ENCODE measurements at regions of chr6 and their contacts with region 1.

Region 1: DNA sequence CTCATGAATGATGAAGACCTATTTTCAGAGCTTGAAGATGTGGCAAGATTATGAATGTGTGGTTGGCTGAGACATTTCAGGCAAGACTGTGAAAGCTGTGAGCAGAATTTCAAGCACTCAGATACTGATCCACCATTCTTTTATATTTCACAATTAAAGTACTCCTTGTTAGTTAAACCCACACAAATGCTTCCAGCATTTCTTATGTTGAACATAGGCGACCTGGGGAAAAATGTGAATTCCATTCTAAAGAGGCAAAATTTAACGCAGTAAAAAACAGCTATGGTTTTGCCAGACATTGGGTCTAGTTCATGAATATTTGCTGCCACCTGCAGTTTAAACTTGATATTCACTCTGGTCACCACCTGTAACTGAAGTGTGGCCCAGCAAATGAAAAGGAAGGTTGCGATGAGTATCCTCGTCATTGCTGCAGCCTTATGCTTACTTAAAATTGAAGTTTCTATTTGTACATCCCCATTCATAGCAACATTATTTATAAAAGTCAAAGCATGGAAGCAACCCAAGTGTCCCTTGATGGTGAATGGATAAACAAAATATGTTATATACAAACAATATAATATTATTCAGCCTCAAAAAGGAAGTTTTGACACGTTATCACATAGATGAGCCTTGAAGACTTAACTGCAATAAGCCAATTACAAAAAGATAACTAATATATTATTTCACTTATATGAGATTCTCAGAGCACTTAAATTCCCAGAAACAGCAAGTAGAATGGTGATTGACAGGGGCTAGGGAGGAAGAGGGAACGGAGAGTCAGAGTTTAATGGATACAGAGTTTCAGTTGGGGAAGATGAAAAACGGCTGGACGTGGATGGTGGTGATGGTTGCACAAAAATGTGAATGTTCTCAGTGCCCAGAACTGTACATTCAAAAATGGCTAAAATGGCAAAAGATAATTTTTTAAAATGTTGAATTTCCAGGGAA is 32.4 kb upstream of the FAM184A start:
- DNase-seq: peak; percentile 49
- H3K4me3 ChIP-seq: no peak overlapping the region
- H3K27ac ChIP-seq: no peak overlapping the region
- H3K4me1 ChIP-seq: no peaks in the 10 kb centered on the region
- H3K27me3 ChIP-seq: no peaks in the 10 kb centered on the region
- CTCF ChIP-seq: peak; percentile 67
- EP300 ChIP-seq: no peak
- RAD21 ChIP-seq: peak; percentile 87

Region 2: DNA sequence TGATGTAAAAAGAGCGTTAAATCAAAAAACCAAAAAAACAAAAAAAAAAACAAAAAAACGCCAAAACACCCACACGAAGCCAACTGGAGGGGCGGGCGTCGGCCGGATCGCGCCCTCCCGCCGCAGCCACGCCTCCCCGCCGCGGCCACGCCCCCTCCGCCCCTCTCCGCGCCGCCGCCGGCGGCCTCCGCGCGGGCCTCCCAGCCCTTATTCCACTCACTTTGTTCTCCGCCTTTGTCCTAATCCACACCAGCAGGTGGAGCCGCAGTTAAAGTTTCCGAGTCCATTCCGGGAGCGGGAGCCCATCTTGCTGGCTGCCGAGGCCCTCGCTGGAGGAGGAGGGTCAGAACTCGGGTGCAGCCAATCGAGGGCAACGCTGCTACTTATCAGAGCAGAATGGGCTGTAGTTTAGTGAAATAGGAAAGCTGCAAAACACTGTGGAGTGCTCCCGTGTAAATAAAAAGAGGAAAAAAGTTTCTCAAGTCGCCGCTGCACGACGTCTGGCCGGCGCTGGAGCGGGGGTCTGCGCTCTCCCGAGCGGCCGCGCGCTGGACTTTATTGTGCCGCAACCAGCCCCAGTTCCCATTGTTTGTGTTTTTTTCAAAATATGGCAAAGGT is 217.0 kb before region 1 on chr6 and contains the start of gene ASF1A:
- CTCF ChIA-PET with region 1: interaction called, 15 read pairs
- POLR2A ChIA-PET with region 1: no interaction called
- DNase-seq: peak; percentile 93
- H3K4me3 ChIP-seq: peak within 1 kb of the TSS; percentile 96 to 98
- H3K27ac ChIP-seq: peak within 1 kb of the TSS; percentile 74 to 92
- H3K4me1 ChIP-seq: peaks cover 7 to 20% of the 10 kb centered on the region in 2 experiments; a peak in 3 of 4 replicates
- H3K27me3 ChIP-seq: no peaks in the 10 kb centered on the region
- CTCF ChIP-seq: peak; percentile 65
- EP300 ChIP-seq: peak in 1 of 2 experiments; percentile 48; a peak in 1 of 4 replicates
- RAD21 ChIP-seq: peak; percentile 49
- polyA plus RNA-seq, gene ASF1A: 5.2 and 5.4 TPM in 2 replicates

Region 3: GRCh38 chr6:118968416-118968815 is 142.5 kb before region 1 on chr6:
- CTCF ChIA-PET with region 1: interaction called, 74 read pairs
- POLR2A ChIA-PET with region 1: no interaction called
- DNase-seq: no peak
- H3K4me3 ChIP-seq: no peak overlapping the region
- H3K27ac ChIP-seq: no peak overlapping the region
- H3K4me1 ChIP-seq: no peaks in the 10 kb centered on the region
- H3K27me3 ChIP-seq: no peaks in the 10 kb centered on the region
- CTCF ChIP-seq: peak; percentile 62
- EP300 ChIP-seq: no peak
- RAD21 ChIP-seq: peak; percentile 70

Region 4: DNA sequence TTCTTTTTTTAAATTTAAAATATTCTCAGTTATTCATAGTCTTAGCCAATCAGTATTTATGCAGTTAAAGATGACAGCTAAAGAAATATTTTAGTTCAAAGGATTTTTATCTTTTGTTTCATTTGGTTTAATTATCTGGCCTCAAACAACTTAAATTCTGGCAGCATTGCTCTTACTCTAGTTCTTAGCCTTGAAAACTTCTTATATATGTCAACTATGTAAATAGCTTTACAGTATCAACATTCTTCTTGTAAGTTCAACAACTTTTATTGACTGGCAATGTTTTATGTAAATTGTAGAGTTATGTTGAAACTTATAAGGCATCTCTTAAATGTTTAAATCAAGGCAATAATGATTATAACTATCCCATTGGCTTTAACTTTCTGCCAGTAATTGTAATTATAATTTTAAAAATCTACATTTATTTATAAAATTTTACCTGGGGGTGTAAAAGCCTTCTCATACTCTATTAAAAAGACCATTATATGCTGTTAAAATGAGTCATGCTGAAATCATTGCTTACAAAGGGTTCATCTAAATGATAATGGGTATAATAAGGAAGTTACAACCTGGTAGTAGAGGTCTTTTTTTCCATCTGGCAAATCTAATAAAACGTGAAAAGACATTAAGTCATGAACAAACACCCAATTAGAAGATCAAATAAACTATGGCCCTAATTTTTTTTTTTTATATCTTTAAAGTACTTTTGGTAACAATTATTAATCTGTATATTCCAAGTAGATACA is 13.4 kb after region 1 on chr6:
- CTCF ChIA-PET with region 1: interaction called, 23 read pairs
- POLR2A ChIA-PET with region 1: no interaction called
- DNase-seq: no peak
- H3K4me3 ChIP-seq: no peak overlapping the region
- H3K27ac ChIP-seq: no peak overlapping the region
- H3K4me1 ChIP-seq: peaks cover 4 to 7% of the 10 kb centered on the region in 2 experiments; a peak in 3 of 4 replicates
- H3K27me3 ChIP-seq: no peaks in the 10 kb centered on the region
- CTCF ChIP-seq: no peak
- EP300 ChIP-seq: no peak
- RAD21 ChIP-seq: no peak

Region 5: GRCh38 chr6:119267126-119267905 is 156.4 kb after region 1 on chr6:
- CTCF ChIA-PET with region 1: no interaction called
- POLR2A ChIA-PET with region 1: no interaction called
- DNase-seq: no peak
- H3K4me3 ChIP-seq: no peak overlapping the region
- H3K27ac ChIP-seq: no peak overlapping the region
- H3K4me1 ChIP-seq: no peaks in the 10 kb centered on the region
- H3K27me3 ChIP-seq: no peaks in the 10 kb centered on the region
- CTCF ChIP-seq: no peak
- EP300 ChIP-seq: no peak
- RAD21 ChIP-seq: no peak

Region 6: DNA sequence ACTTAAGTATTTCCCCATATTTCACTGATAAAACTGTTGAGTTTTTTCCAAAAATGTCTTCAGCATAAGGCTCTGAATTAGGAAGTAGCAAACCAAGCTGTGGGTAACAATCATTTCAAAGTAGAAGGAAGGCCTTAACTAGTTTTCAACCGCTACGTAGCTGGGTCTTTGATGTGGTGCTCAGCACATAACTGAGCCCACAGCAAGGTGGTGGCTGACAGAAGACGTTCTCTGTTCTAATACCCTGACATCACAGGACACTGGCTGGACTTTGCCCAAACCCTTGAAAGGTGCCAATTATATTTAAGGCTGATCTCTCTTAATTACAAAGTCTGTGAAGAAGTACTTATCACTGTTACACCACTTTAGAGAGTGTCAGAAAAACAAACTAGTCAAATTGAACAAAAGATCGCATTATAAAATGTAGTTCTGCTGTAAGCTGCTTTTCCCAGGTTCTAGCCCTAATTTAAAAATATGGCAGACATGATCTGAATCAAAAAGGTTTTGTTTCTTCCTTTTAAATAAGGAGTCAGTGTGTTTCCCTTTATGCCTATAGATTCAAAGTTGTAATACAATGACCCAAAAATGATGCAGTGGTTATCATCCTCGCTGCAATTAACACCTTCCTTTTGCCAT is 212.0 kb after region 1 on chr6:
- CTCF ChIA-PET with region 1: no interaction called
- POLR2A ChIA-PET with region 1: no interaction called
- DNase-seq: no peak
- H3K4me3 ChIP-seq: no peak overlapping the region
- H3K27ac ChIP-seq: no peak overlapping the region
- H3K4me1 ChIP-seq: peaks cover 0 to 20% of the 10 kb centered on the region in 2 experiments; a peak in 2 of 4 replicates
- H3K27me3 ChIP-seq: no peaks in the 10 kb centered on the region
- CTCF ChIP-seq: no peak
- EP300 ChIP-seq: no peak
- RAD21 ChIP-seq: no peak

Measured in SK-N-SH (cell line).